SK-N-SH (cell line): ENCODE measurements at regions of chr3 and their contacts with region 1.

Region 1: DNA sequence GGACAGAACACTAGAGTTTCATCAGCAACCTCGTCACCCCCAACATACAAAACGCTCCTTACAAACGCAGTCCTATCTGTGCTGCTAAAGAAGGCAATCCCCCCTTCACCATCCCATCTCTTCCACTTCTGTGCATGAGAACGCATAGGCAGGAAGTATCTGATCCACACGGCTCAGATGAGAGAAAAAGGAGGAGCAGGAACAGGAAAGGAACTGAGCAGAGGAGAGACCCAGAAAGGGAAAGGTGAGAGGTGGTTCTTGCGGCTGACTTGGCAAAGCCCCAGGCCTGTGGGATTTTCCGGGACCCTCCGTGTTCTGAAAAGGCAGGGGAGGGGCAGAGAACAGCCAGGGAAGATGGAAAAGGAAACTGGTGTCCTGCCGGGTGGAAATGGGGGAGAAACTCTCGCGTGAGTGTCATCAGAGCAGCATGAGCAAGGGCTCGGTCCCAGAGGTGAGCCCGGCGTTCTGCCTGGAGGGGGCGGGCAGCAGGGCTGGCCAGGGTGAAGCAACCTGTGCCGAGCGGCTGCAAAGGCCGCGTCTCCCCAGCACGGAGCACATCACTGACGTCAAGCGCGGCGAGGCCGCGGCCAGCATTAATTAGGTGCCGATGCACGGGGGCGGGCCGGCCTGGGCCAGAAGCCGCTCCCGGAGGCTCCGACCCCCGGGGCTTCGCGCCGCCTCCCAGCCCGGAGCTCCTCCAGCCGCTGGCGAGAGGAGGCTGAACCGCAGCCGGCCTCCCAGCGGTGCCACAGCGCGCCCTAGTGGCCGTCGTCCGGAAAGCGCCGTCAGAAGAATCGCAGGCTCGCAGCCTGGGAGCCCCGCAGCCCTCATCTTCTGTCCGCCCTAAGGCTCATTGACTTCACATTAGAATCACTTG is 35.8 kb downstream of the CPN2 start:
- DNase-seq: peak; percentile 94
- H3K4me3 ChIP-seq: peak overlapping the region; percentile 44 to 69
- H3K27ac ChIP-seq: peak overlapping the region in 1 of 2 experiments; percentile 24; a peak in 2 of 4 replicates
- H3K4me1 ChIP-seq: peaks cover 0 to 28% of the 10 kb centered on the region in 2 experiments; a peak in 1 of 4 replicates
- H3K27me3 ChIP-seq: peaks cover 26% of the 10 kb centered on the region
- CTCF ChIP-seq: peak; percentile 86
- EP300 ChIP-seq: no peak
- RAD21 ChIP-seq: peak; percentile 96

Region 2: GRCh38 chr3:194003125-194004057 is 311.9 kb before region 1 on chr3:
- CTCF ChIA-PET with region 1: interaction called, 14 read pairs
- POLR2A ChIA-PET with region 1: no interaction called
- DNase-seq: peak; percentile 86
- H3K4me3 ChIP-seq: peak overlapping the region; percentile 44 to 58
- H3K27ac ChIP-seq: peak overlapping the region; percentile 68 to 70
- H3K4me1 ChIP-seq: peaks cover 9 to 16% of the 10 kb centered on the region in 2 experiments; a peak in 2 of 4 replicates
- H3K27me3 ChIP-seq: 0 out of 2 replicates have a peak, but pooled peaks cover 6% of the 10 kb centered on the region
- CTCF ChIP-seq: no peak
- EP300 ChIP-seq: peak in 1 of 2 experiments; percentile 32; a peak in 1 of 4 replicates
- RAD21 ChIP-seq: peak; percentile 20

Region 3: DNA sequence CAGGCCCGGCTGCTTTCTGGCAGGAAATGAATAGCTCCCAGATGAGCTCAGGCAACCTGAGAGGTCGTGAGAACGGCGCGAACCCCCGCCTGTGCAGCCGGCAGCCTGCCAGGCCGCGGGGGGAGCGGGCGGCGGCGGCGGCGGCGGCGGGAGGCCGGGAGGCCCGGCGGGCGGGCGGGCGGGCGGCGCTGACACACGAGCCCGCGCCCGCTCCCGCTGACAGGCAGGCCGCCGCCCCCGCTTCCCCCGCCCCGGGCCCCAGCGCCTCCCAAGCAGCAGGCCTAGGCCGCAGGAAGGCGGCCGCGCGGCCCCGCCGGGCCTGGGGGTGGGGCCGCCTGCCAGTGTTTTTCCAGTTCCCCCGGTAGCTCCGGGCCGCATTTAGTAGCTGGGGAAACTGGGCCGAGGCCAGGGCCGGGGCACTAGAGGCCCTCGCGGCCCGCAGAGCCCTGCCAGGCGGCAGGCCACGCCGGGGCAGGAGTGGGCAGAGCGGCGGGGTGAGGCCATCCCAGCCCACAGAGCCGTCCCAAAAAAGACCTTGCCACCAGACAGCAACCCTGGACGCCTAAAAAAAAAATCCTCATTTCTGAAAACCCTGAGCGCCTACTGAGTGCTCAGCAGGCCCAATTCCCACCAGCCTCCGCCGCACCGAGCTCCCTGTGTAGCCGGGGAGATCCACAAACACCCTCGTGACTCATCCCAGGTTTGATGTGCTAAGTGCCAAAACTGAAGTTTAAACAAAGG is 173.7 kb before region 1 on chr3:
- CTCF ChIA-PET with region 1: interaction called, 94 read pairs
- POLR2A ChIA-PET with region 1: interaction called, 11 read pairs
- DNase-seq: peak; percentile 91
- H3K4me3 ChIP-seq: peak overlapping the region; percentile 44 to 46
- H3K27ac ChIP-seq: peak overlapping the region; percentile 99
- H3K4me1 ChIP-seq: peaks cover 15 to 54% of the 10 kb centered on the region in 2 experiments
- H3K27me3 ChIP-seq: no peaks in the 10 kb centered on the region
- CTCF ChIP-seq: no peak
- EP300 ChIP-seq: peak; percentile 43 to 66; a peak in 3 of 4 replicates
- RAD21 ChIP-seq: peak; percentile 31

Region 4: DNA sequence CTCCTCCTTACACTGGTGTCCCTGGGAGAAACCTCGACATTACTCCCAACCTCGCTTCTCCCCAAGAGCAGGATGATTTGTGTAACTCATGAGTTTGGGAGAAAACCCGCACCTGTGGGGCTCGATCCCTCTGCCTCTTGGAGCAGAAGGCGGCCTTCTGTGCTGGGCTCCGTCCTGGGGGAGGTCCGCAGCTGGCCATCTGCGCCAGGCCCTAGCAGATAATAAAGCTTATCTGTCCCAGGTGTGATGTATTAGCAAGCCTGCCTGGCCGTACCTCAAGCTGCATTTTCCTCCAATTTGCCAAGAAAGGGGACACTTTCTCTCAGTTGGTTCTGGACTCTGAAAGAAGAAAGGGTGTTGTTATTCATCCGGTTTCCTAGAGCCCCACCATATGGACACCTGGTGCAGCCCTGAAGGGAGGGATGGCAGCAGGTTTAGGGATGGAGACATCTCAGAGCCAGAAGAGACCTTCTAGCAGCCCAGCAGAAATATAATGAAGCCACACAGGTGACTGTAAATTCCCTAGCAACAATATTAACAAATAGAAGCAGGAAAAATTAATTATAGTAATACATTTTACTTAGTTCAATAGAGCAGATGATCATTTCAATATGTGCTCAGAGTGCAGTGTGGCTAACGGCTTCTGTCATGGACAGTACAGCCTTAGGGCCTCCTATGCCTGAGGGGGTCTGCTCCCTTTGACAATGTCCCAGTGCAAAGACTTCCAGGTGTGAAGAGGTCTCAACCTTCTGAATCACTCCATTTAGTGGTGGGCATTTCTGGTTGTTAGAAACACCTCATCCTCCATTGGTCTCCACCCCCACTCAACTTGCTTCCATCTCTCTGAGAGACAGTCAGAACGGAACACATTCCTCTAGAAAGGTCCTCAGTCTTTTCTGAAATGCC is 59.0 kb before region 1 on chr3:
- CTCF ChIA-PET with region 1: interaction called, 21 read pairs
- POLR2A ChIA-PET with region 1: no interaction called
- DNase-seq: no peak
- H3K4me3 ChIP-seq: no peak overlapping the region
- H3K27ac ChIP-seq: peak overlapping the region in 1 of 2 experiments; percentile 90; a peak in 2 of 4 replicates
- H3K4me1 ChIP-seq: peaks cover 0 to 33% of the 10 kb centered on the region in 2 experiments; a peak in 2 of 4 replicates
- H3K27me3 ChIP-seq: no peaks in the 10 kb centered on the region; the same call in 1 of the 2 replicates
- CTCF ChIP-seq: no peak
- EP300 ChIP-seq: peak in 1 of 2 experiments; percentile 33; a peak in 1 of 4 replicates
- RAD21 ChIP-seq: peak; percentile 34; the same call in 1 of the 2 replicates

Region 5: DNA sequence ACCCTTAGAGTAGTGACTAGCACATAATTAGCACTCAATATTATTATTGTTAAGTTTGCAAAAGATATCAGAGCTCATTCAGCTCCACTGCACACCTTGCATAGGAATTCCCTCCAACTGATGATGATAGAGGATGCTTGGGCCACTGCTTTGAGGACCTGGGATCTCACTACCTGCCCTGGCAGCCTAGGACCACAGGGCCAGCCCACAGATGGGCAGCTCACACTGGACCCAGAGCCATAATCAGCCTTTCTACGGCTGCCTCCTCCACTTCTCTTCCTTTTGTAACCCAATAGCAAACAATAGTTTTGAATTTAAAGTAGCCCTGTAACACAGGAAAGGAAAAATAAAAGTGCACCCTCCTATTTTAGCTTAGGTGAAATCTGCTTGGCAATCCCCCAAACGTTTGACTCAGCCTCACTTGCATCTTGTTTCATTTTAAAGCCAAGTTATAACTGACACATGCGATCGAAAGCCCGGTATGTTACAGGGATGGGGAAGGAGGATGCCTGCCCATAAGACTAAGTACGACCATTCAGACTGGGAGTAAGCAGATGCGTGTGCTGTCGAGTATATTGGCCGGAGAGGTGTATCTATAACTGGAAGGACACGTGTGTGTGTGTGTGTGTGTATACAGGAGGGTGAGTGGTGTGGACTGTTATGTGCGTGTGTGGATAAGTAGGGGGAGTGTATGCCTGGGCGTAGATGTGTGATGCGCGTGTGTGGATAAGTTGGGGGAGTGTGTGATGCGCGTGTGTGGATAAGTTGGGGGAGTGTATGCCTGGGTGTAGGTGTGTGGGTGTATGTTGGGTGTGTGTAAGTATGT is 30.1 kb before region 1 on chr3:
- CTCF ChIA-PET with region 1: interaction called, 20 read pairs
- POLR2A ChIA-PET with region 1: no interaction called
- DNase-seq: no peak
- H3K4me3 ChIP-seq: no peak overlapping the region
- H3K27ac ChIP-seq: no peak overlapping the region
- H3K4me1 ChIP-seq: peaks cover 0 to 25% of the 10 kb centered on the region in 2 experiments; a peak in 1 of 4 replicates
- H3K27me3 ChIP-seq: peaks cover 9% of the 10 kb centered on the region; the same call in 1 of the 2 replicates
- CTCF ChIP-seq: no peak
- EP300 ChIP-seq: no peak
- RAD21 ChIP-seq: no peak